ENCODE measurements at regions of chr13 and their contacts with region 1.

Region 1: DNA sequence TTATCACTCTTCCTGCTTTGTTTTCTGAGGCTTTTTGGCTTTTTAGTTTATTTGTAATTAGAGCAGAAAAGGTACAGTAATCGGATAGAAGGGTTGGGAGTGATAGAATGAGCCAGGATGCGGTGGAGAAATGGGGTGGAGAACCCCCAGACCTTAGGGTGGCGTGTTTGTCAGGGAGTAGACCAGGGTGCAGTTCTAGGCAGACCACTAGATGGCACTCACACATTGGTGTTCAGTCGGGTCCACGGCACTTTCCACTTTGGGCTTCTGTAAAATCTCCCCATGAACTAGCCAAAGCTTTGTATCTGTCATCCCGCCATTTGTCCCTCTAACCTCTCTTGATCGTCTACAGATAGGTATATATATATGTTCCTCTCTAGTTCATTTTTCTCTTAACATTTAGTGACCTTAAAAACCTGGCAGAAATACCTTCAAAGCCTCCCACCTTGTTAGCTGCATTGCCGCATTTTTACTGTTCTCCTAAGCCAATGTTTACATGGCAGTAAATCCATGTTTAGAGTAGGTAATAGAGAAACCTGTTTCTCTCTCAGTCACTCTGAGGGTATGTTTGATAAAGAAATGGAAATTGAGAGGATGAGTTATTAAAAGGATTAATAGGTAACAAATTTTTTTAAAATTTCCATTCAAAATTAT is 154.9 kb downstream of the TM9SF2 start:
- DNase-seq: peak; percentile 57 to 95 (median 86)

Region 2: DNA sequence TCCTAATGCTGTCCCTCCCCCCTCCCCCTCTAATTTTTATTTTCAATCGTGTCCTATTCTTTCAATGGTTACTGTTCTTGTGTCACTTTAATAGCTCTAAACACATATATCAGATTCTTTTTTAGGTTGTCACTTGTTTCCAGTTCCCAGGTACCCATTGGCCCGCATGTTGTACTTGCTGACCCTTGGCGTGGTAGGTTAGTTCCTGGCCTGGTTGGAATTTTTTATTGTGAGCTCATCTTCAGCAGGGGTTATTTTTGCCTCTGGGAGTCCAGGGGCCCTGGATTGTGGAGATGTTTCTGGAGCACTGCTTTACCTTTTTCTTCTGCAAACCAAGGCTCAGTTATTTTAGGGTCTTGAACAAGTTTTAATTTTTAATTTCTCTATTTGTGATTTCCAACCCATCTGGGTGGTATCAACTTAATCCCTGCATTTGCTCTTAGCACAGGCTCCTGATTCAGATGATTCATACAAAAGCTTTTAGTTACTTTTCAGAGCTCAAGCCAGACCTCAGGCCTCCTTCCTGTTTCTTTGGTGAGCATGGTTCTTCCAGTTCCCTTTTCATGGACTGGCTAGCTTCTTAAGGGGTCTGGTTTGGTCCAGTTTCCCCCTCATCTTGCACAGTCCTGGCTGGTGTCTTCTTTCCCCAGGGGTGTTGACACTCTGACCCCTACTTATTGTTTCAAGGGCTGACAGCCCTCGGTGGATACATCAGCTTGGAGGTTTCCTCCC is 65.6 kb after region 1 on chr13:
- intact Hi-C with region 1: no loop called
- DNase-seq: no peak

Region 3: GRCh38 chr13:100088644-100089464 is 432.6 kb after region 1 on chr13 and contains the start of gene PCCA:
- intact Hi-C with region 1: loop called (anchors 10 kb)
- DNase-seq: peak; percentile 91 to 98 (median 96)

Region 4: GRCh38 chr13:100235311-100235901 is 579.2 kb after region 1 on chr13:
- intact Hi-C with region 1: loop called (anchors 5 kb)
- DNase-seq: peak in 8 of 42 donors; percentile 15 to 59 (median 30)

Region 5: GRCh38 chr13:100514788-100515409 is 858.7 kb after region 1 on chr13:
- intact Hi-C with region 1: loop called (anchors 5 kb)
- DNase-seq: peak; percentile 73 to 94 (median 88)

Region 6: GRCh38 chr13:101127741-101128353 is 1471.6 kb after region 1 on chr13:
- intact Hi-C with region 1: loop called (anchors 10 kb)
- DNase-seq: peak in 22 of 42 donors; percentile 11 to 71 (median 36)

Measured in head of caudate nucleus (tissue), 42 donors.